B cell (primary cell): ENCODE measurements at regions of chr10 and their contacts with region 1.

Region 1: DNA sequence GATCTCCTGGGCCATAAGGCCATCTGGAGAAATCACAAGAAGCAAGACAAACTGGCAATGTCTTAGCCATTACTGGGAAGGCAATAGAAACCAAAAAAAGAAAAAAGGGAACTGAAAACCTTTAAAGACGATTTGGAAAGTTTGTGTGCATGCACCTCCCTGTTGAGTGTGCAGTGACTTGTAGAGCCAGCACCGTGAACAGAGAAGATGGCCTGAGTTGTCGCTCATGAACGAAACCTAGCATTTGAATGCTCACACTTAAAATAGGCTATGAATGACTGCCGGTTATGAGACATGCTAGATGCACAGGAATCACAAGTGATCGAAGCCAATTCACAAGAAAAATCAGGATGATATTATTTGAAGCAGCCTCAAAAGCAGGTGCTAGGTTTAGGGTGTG is 151.3 kb upstream of the ADO start:
- DNase-seq: peak; percentile 84
- ATAC-seq: peak; percentile 91
- H3K4me3 ChIP-seq: no peak overlapping the region
- H3K4me3 Mint-ChIP-seq: peak overlapping the region; percentile 12
- H3K27ac ChIP-seq: no peak overlapping the region
- H3K27ac Mint-ChIP-seq: peak overlapping the region; percentile 53
- H3K4me1 ChIP-seq: peaks cover 51 to 57% of the 10 kb centered on the region in 2 donors
- H3K4me1 Mint-ChIP-seq: peaks cover 56% of the 10 kb centered on the region
- H3K27me3 ChIP-seq: peaks cover 0 to 31% (median 2%) of the 10 kb centered on the region in 4 experiments
- H3K27me3 Mint-ChIP-seq: peaks cover 6% of the 10 kb centered on the region
- CTCF ChIP-seq: no peak

Region 2: GRCh38 chr10:62637249-62638061 is 15.8 kb before region 1 on chr10:
- CTCF ChIA-PET with region 1: interaction called, 7 read pairs
- POLR2A ChIA-PET with region 1: interaction called, 4 read pairs
- intact Hi-C with region 1: loop called (anchors 1 kb)
- DNase-seq: peak; percentile 76
- ATAC-seq: peak; percentile 65
- H3K4me3 ChIP-seq: peak overlapping the region; percentile 16 to 72 (median 52)
- H3K4me3 Mint-ChIP-seq: no peak overlapping the region
- H3K27ac ChIP-seq: peak overlapping the region; percentile 66 to 78
- H3K27ac Mint-ChIP-seq: no peak overlapping the region
- H3K4me1 ChIP-seq: peaks cover 65 to 72% of the 10 kb centered on the region in 2 donors
- H3K4me1 Mint-ChIP-seq: peaks cover 36% of the 10 kb centered on the region
- H3K27me3 ChIP-seq: no peaks in the 10 kb centered on the region
- H3K27me3 Mint-ChIP-seq: no peaks in the 10 kb centered on the region
- CTCF ChIP-seq: no peak

Region 3: DNA sequence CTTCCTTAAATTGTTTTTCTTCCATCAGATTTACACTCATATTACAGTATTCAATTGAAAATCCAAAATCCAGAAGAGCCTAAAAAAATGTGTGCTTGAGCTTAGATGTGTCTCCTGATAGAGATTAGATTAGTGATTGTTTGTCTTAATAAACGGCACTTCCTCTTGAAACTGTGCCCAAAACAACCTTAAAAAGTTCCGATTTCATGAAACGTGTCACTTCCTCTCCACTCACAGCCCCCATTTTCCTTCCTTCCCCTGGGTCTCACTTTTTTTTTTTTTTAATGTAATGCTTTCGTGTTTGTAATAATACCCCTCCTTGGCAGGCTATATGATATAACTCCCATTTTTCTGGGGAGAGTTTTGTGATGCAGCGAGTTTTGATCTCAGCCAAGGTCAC is 36.5 kb after region 1 on chr10:
- CTCF ChIA-PET with region 1: no interaction called
- POLR2A ChIA-PET with region 1: no interaction called
- intact Hi-C with region 1: loop called (anchors 2 kb)
- DNase-seq: peak; percentile 73
- ATAC-seq: peak; percentile 73
- H3K4me3 ChIP-seq: peak overlapping the region in 2 of 5 experiments; percentile 22
- H3K4me3 Mint-ChIP-seq: peak overlapping the region; percentile 80
- H3K27ac ChIP-seq: peak overlapping the region; percentile 4 to 66
- H3K27ac Mint-ChIP-seq: peak overlapping the region; percentile 83
- H3K4me1 ChIP-seq: peaks cover 35 to 37% of the 10 kb centered on the region in 2 donors
- H3K4me1 Mint-ChIP-seq: peaks cover 36% of the 10 kb centered on the region
- H3K27me3 ChIP-seq: no peaks in the 10 kb centered on the region
- H3K27me3 Mint-ChIP-seq: no peaks in the 10 kb centered on the region
- CTCF ChIP-seq: no peak

Region 4: GRCh38 chr10:62742536-62743061 is 89.3 kb after region 1 on chr10:
- CTCF ChIA-PET with region 1: no interaction called
- POLR2A ChIA-PET with region 1: no interaction called
- intact Hi-C with region 1: loop called (anchors 2 kb)
- DNase-seq: peak; percentile 65
- ATAC-seq: peak; percentile 78
- H3K4me3 ChIP-seq: no peak overlapping the region
- H3K4me3 Mint-ChIP-seq: peak overlapping the region; percentile 69
- H3K27ac ChIP-seq: no peak overlapping the region
- H3K27ac Mint-ChIP-seq: peak overlapping the region; percentile 80
- H3K4me1 ChIP-seq: peaks cover 13% of the 10 kb centered on the region in 2 donors
- H3K4me1 Mint-ChIP-seq: peaks cover 14% of the 10 kb centered on the region
- H3K27me3 ChIP-seq: no peaks in the 10 kb centered on the region
- H3K27me3 Mint-ChIP-seq: no peaks in the 10 kb centered on the region
- CTCF ChIP-seq: no peak